Activated CD4-positive, alpha-beta memory T cell treated with anti-CD3 and anti-CD28 coated beads for 36 hours (primary cell): ENCODE measurements at regions of chr1 and their contacts with region 1.

Region 1: GRCh38 chr1:160428655-160429054 is 28.3 kb downstream of the VANGL2 start:
- DNase-seq: peak; percentile 57
- H3K4me3 Mint-ChIP-seq: no peak overlapping the region
- H3K27ac Mint-ChIP-seq: peak overlapping the region; percentile 77
- H3K4me1 Mint-ChIP-seq: peaks cover 60% of the 10 kb centered on the region
- H3K27me3 Mint-ChIP-seq: no peaks in the 10 kb centered on the region

Region 2: DNA sequence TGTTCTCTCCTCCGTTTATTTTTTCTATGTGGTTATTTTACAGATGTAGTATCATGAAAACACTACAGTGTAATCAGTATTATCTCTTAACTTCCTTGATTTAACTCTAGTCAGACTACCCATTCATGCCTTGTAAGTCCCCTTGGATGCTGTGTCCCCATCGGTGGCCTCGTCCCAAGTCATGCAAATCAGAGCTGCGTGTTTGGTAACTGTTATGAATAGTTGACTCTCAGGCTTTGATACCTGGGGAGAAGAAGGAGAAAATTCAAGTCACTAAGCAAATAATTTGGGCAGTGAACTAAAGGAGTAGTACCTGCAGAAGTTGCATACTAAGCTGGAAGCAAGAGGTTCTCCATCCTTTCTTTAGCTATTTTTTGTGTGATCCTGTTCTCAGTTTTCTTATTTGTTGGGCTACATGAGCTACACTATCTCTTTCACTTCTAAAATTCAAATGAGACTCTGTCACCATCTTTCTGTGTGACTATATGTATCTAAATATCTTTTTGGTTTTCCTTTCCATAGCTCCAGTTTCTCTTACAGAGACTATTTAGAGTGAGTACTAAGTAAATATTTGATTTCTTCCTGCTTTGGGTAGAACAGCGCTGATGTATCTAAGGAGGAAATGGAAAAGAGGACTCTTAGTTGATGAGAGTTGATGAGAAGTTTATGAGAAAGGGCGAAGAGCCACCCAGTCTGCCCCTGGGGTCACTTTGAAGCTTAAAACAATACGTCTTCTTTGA is 22.6 kb after region 1 on chr1:
- CTCF ChIA-PET with region 1: interaction called, 5 read pairs
- POLR2A ChIA-PET with region 1: interaction called, 7 read pairs
- intact Hi-C with region 1: loop called (anchors 1 kb)
- DNase-seq: peak; percentile 45
- H3K4me3 Mint-ChIP-seq: peak overlapping the region; percentile 53
- H3K27ac Mint-ChIP-seq: peak overlapping the region; percentile 97
- H3K4me1 Mint-ChIP-seq: peaks cover 79% of the 10 kb centered on the region
- H3K27me3 Mint-ChIP-seq: no peaks in the 10 kb centered on the region

Region 3: GRCh38 chr1:160925652-160926241 is 497.1 kb after region 1 on chr1:
- CTCF ChIA-PET with region 1: no interaction called
- POLR2A ChIA-PET with region 1: no interaction called
- intact Hi-C with region 1: no loop called
- DNase-seq: no peak
- H3K4me3 Mint-ChIP-seq: no peak overlapping the region
- H3K27ac Mint-ChIP-seq: no peak overlapping the region
- H3K4me1 Mint-ChIP-seq: no peaks in the 10 kb centered on the region
- H3K27me3 Mint-ChIP-seq: peaks cover 2% of the 10 kb centered on the region